Heart left ventricle (tissue), 16 donors: ENCODE measurements at regions of chr14 and their contacts with region 1.

Region 1: GRCh38 chr14:51807356-51807755 is 53.1 kb upstream of the GNG2 start:
- DNase-seq: no peak
- ATAC-seq: no peak
- H3K4me3 ChIP-seq: no peak overlapping the region
- H3K27ac ChIP-seq: no peak overlapping the region
- H3K4me1 ChIP-seq: no peaks in the 10 kb centered on the region
- H3K27me3 ChIP-seq: no peaks in the 10 kb centered on the region
- CTCF ChIP-seq: no peak
- POLR2A ChIP-seq: no peak

Region 2: DNA sequence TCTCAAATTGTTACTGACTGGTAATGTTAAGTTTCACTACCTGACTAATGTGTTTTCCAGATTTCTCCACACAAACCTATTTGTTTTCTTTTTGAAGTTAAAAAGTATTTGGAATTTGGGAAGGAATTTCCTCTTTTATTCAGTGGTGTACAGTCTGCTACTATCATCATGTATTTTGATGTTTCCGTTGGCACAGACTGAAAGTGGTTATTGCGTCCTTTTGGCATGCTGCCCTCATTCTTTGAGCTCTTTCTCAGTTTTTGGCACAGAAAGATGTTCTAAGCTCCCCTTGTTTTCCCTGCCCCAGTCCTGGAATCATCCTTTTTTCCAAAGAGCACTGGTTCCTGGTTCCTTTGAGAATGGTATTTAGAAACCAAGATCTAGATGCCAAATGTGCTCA is 150.6 kb after region 1 on chr14:
- intact Hi-C with region 1: loop called in 1 of 10 experiments (anchors 10 kb)
- DNase-seq: no peak
- ATAC-seq: peak in 2 of 4 donors; percentile 45 to 49
- H3K4me3 ChIP-seq: no peak overlapping the region
- H3K27ac ChIP-seq: no peak overlapping the region
- H3K4me1 ChIP-seq: peaks cover 0 to 13% (median 3%) of the 10 kb centered on the region in 12 donors
- H3K27me3 ChIP-seq: no peaks in the 10 kb centered on the region
- CTCF ChIP-seq: no peak
- POLR2A ChIP-seq: no peak